ENCODE measurements at regions of chr1 and their contacts with region 1.

Region 1: GRCh38 chr1:44730741-44731512 is at the start of gene RNU5D-1:
- DNase-seq: peak; percentile 99
- H3K4me3 ChIP-seq: peak within 1 kb of the TSS in 1 of 3 experiments; percentile 16
- H3K27ac ChIP-seq: peak within 1 kb of the TSS; percentile 100
- H3K4me1 ChIP-seq: peaks cover 13% of the 10 kb centered on the region
- H3K27me3 ChIP-seq: no peaks in the 10 kb centered on the region
- CTCF ChIP-seq: peak; percentile 77 to 86
- total RNA-seq, gene RNU5D-1: not detected

Region 2: GRCh38 chr1:44775078-44775929 is 44.4 kb after region 1 on chr1 and contains the start of gene RPS8:
- CTCF ChIA-PET with region 1: interaction called, 10 read pairs
- dilution Hi-C with region 1: loop called (anchors 5 kb)
- in situ Hi-C with region 1: no loop called
- intact Hi-C with region 1: loop called (anchors 1 kb)
- DNase-seq: peak; percentile 92
- H3K4me3 ChIP-seq: peak within 1 kb of the TSS; percentile 83 to 92 (median 86)
- H3K27ac ChIP-seq: peak within 1 kb of the TSS; percentile 98
- H3K4me1 ChIP-seq: peaks cover 15% of the 10 kb centered on the region
- H3K27me3 ChIP-seq: no peaks in the 10 kb centered on the region
- CTCF ChIP-seq: no peak
- total RNA-seq, gene RPS8: 1,053 to 1,537 TPM

Region 3: GRCh38 chr1:44799770-44800584 is 69.0 kb after region 1 on chr1 and contains the start of gene PLK3:
- CTCF ChIA-PET with region 1: no interaction called
- dilution Hi-C with region 1: no loop called
- in situ Hi-C with region 1: no loop called
- intact Hi-C with region 1: loop called (anchors 2 kb)
- DNase-seq: peak; percentile 98
- H3K4me3 ChIP-seq: peak within 1 kb of the TSS; percentile 33 to 89 (median 63)
- H3K27ac ChIP-seq: peak within 1 kb of the TSS; percentile 89
- H3K4me1 ChIP-seq: peaks cover 30% of the 10 kb centered on the region
- H3K27me3 ChIP-seq: no peaks in the 10 kb centered on the region
- CTCF ChIP-seq: peak; percentile 89 to 91
- total RNA-seq, gene PLK3: 53.5 to 101 TPM

Region 4: DNA sequence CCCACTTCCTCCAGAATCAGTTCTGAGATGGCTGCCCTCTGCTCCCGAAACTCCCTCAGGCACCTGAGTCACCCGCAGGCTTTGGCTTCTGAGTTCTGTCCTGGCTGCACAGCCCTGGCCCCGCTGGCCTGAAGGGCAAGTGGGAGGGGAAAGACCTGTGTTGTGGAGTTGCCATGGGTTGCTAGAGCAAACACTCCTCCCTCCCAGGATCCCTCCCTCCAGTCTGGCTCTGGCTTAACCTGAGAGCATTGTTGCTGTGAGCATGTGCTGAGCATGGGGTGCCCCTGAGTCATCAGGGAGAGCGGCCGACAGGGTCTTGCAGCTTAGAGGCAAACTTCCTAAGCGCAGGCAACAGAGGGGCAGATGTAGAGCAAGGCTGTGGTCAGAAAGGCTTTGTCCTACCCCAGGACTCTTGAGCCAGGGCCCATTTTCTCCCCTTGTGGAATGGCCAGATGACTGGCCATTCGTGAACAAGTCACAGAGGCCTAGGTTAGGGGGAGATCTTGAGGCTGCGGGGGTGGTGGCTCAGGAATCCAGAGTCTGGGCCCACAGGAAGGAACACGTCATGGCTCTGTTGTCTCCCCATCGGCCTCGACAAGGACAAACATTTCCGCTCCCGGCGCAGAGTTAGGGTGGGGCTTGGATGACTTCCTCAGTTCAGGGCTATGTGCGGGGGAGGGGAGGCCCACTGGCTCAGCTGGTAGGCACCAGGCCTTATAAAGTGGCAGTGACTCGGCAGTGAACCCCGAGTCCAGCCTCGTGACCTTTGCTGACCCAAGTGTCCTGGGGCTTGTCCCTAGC is 76.5 kb after region 1 on chr1 and contains the start of gene DYNLT4:
- CTCF ChIA-PET with region 1: interaction called, 6 read pairs
- dilution Hi-C with region 1: no loop called
- in situ Hi-C with region 1: no loop called
- intact Hi-C with region 1: loop called (anchors 1 kb)
- DNase-seq: peak; percentile 99
- H3K4me3 ChIP-seq: no peak within 1 kb of the TSS
- H3K27ac ChIP-seq: peak within 1 kb of the TSS; percentile 97
- H3K4me1 ChIP-seq: peaks cover 81% of the 10 kb centered on the region
- H3K27me3 ChIP-seq: no peaks in the 10 kb centered on the region
- CTCF ChIP-seq: no peak
- total RNA-seq, gene DYNLT4: not detected

Region 5: GRCh38 chr1:44819608-44820327 is 88.8 kb after region 1 on chr1:
- CTCF ChIA-PET with region 1: no interaction called
- dilution Hi-C with region 1: no loop called
- in situ Hi-C with region 1: no loop called
- intact Hi-C with region 1: loop called (anchors 1 kb)
- DNase-seq: peak; percentile 98
- H3K4me3 ChIP-seq: peak overlapping the region; percentile 4 to 47 (median 31)
- H3K27ac ChIP-seq: peak overlapping the region; percentile 94
- H3K4me1 ChIP-seq: peaks cover 24% of the 10 kb centered on the region
- H3K27me3 ChIP-seq: no peaks in the 10 kb centered on the region
- CTCF ChIP-seq: no peak

Measured in mammary epithelial cell (primary cell).